ENCODE measurements at regions of chr10 and their contacts with region 1.

Region 1: GRCh38 chr10:72223743-72224101 is 7.6 kb upstream of the ASCC1 start:
- DNase-seq: no peak
- H3K4me3 ChIP-seq: no peak overlapping the region
- H3K4me3 Mint-ChIP-seq: peak overlapping the region in 3 of 8 donors; percentile 22 to 69 (median 44)
- H3K27ac ChIP-seq: no peak overlapping the region
- H3K27ac Mint-ChIP-seq: peak overlapping the region; percentile 17 to 91 (median 78)
- H3K4me1 ChIP-seq: peaks cover 54% of the 10 kb centered on the region
- H3K4me1 Mint-ChIP-seq: peaks cover 36 to 57% (median 45%) of the 10 kb centered on the region in 4 donors
- H3K27me3 ChIP-seq: no peaks in the 10 kb centered on the region
- H3K27me3 Mint-ChIP-seq: no peaks in the 10 kb centered on the region

Region 2: GRCh38 chr10:72133517-72133916 is 90.2 kb before region 1 on chr10:
- CTCF ChIA-PET with region 1: interaction called, 35 read pairs
- POLR2A ChIA-PET with region 1: no interaction called
- intact Hi-C with region 1: no loop called
- DNase-seq: no peak
- H3K4me3 ChIP-seq: no peak overlapping the region
- H3K4me3 Mint-ChIP-seq: peak overlapping the region in 1 of 8 donors; percentile 11
- H3K27ac ChIP-seq: no peak overlapping the region
- H3K27ac Mint-ChIP-seq: peak overlapping the region in 5 of 7 donors; percentile 15 to 74 (median 45)
- H3K4me1 ChIP-seq: peaks cover 28% of the 10 kb centered on the region
- H3K4me1 Mint-ChIP-seq: peaks cover 23 to 36% (median 28%) of the 10 kb centered on the region in 4 donors
- H3K27me3 ChIP-seq: no peaks in the 10 kb centered on the region
- H3K27me3 Mint-ChIP-seq: no peaks in the 10 kb centered on the region

Region 3: DNA sequence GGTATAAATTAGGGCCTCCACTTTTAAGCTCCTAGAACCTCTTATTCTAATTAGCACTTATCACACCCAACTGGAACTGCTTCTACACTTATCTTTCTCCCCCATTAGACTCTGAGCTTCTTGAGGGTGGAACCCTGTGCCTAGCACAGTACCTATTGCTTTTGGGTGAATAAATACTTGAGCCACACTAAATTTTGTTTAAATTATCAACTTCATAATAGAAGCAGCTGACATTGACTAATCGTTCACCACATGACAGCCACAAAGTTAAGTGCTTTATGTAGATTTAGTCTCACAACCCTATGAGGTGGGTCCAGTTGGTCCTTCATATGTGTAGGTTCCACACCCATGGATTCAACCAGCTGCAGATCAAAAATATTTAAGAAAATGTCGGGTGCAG is 167.0 kb after region 1 on chr10:
- CTCF ChIA-PET with region 1: no interaction called
- POLR2A ChIA-PET with region 1: no interaction called
- intact Hi-C with region 1: no loop called
- DNase-seq: no peak
- H3K4me3 ChIP-seq: no peak overlapping the region
- H3K4me3 Mint-ChIP-seq: no peak overlapping the region
- H3K27ac ChIP-seq: no peak overlapping the region
- H3K27ac Mint-ChIP-seq: no peak overlapping the region
- H3K4me1 ChIP-seq: no peaks in the 10 kb centered on the region
- H3K4me1 Mint-ChIP-seq: no peaks in the 10 kb centered on the region
- H3K27me3 ChIP-seq: no peaks in the 10 kb centered on the region
- H3K27me3 Mint-ChIP-seq: no peaks in the 10 kb centered on the region

Region 4: DNA sequence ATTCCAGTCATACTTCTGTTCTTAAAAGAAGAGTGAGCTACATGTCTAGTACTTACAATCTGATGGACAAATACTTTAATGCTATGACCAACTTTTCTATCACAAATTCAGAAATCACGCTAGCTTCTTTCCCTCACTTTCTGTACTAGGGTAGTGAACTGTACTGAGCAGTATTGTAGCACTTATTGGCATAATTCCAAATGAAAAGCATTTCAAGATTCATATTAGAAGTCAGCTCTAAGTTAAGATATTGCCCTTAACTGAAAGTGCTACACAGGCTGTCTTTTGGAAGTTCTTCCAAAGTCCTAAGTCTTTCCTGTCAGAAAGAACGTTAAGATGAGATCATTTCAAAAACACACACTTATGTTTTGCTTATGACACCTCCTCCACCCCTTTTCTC is 859.5 kb after region 1 on chr10:
- CTCF ChIA-PET with region 1: no interaction called
- POLR2A ChIA-PET with region 1: no interaction called
- intact Hi-C with region 1: no loop called
- DNase-seq: no peak
- H3K4me3 ChIP-seq: no peak overlapping the region
- H3K4me3 Mint-ChIP-seq: no peak overlapping the region
- H3K27ac ChIP-seq: no peak overlapping the region
- H3K27ac Mint-ChIP-seq: no peak overlapping the region
- H3K4me1 ChIP-seq: no peaks in the 10 kb centered on the region
- H3K4me1 Mint-ChIP-seq: peaks cover 6 to 30% (median 10%) of the 10 kb centered on the region in 4 donors
- H3K27me3 ChIP-seq: no peaks in the 10 kb centered on the region
- H3K27me3 Mint-ChIP-seq: no peaks in the 10 kb centered on the region